GM12878 (cell line): ENCODE measurements at regions of chr5 and their contacts with region 1.

Region 1: DNA sequence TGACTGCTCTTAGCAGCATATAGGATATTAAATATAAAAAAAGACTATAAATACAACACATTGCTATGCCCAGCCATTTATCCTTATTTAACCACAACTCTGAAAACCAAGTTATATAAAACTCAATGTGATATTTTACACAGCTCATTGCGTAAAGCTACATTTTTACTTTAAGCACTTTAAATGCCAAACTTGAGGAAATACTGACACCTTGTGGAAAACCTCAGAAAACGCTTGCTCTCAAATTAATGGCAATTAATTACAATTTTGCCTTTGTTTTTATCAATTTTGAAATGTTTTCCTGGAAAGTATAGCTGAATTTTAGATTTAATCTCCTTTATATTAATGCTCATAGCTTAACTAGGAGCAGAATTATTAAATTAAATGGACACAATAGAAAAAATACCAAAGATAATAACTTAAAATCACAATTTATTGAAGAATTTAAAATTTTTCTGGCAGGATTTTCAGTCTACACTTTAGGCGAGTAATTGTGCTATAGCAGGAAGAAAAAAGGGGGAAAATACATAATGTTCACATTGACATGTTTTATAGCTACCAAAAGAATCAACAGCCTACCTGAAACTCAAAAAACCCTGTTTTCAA is 25.2 kb upstream of the PLAC8L1 start:
- DNase-seq: no peak
- ATAC-seq: no peak
- H3K4me3 ChIP-seq: no peak overlapping the region
- H3K27ac ChIP-seq: no peak overlapping the region
- H3K4me1 ChIP-seq: no peaks in the 10 kb centered on the region
- H3K27me3 ChIP-seq: no peaks in the 10 kb centered on the region
- CTCF ChIP-seq: peak; percentile 30 to 58 (median 49); a peak in 5 of 6 replicates
- EP300 ChIP-seq: no peak
- POLR2A ChIP-seq: no peak
- RAD21 ChIP-seq: peak; percentile 76

Region 2: DNA sequence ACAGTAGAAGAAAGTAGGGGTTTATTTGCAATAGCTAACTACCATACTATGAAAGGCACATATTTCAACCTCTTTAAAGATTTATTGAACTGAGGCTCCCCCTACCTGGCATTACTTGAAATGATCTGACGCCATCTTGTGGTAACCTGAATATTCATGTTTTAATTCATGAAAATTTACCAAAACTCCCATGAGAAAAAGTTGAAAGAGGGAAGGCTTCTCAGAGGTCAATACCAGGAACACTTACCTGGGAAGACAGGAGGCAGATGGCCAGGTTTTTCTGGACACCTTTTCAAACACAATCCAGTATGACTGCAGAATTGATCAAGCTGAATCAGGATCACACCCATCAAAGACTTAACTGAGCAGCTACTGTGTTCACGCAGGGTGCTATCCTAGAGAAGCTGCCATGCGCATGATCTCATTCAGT is 304.8 kb before region 1 on chr5:
- CTCF ChIA-PET with region 1: interaction called, 4 read pairs
- POLR2A ChIA-PET with region 1: no interaction called
- RAD21 ChIA-PET with region 1: interaction called, 6 read pairs
- SMC1A ChIA-PET with region 1: interaction called, 5 read pairs
- in situ Hi-C with region 1: no loop called
- intact Hi-C with region 1: loop called (anchors 2 kb)
- DNase-seq: no peak
- ATAC-seq: peak; percentile 82
- H3K4me3 ChIP-seq: no peak overlapping the region
- H3K27ac ChIP-seq: no peak overlapping the region
- H3K4me1 ChIP-seq: no peaks in the 10 kb centered on the region
- H3K27me3 ChIP-seq: no peaks in the 10 kb centered on the region
- CTCF ChIP-seq: peak; percentile 61 to 73 (median 70)
- EP300 ChIP-seq: no peak
- POLR2A ChIP-seq: no peak
- RAD21 ChIP-seq: peak; percentile 65

Region 3: DNA sequence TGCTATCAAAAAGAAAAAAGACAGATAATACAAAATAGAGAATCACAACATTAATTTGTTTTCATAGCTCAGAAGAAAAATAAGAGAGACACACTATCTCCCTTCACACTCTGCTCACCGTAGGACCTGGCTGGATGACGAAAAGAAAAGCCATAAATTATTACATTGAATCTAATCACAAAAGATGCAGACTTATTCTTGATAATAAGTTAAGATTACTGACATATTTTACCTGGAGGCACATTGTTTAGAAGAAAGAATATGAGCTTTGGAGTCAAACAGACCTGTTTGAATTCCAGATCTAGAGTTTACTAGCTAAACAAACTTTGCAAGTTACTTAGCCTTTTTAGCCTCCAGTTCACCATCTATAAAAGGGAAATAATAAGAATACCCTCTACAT is 11.0 kb before region 1 on chr5:
- CTCF ChIA-PET with region 1: interaction called, 13 read pairs
- POLR2A ChIA-PET with region 1: no interaction called
- RAD21 ChIA-PET with region 1: no interaction called
- SMC1A ChIA-PET with region 1: interaction called, 9 read pairs
- in situ Hi-C with region 1: no loop called
- intact Hi-C with region 1: no loop called
- DNase-seq: no peak
- ATAC-seq: no peak
- H3K4me3 ChIP-seq: no peak overlapping the region
- H3K27ac ChIP-seq: no peak overlapping the region
- H3K4me1 ChIP-seq: no peaks in the 10 kb centered on the region
- H3K27me3 ChIP-seq: no peaks in the 10 kb centered on the region
- CTCF ChIP-seq: no peak
- EP300 ChIP-seq: no peak
- POLR2A ChIP-seq: no peak
- RAD21 ChIP-seq: no peak